Activated naive CD4-positive, alpha-beta T cell treated with anti-CD3 and anti-CD28 coated beads for 36 hours (primary cell): ENCODE measurements at regions of chr3 and their contacts with region 1.

Region 1: GRCh38 chr3:10142707-10143566 is 1.4 kb downstream of the VHL start:
- DNase-seq: peak; percentile 48
- H3K4me3 Mint-ChIP-seq: peak overlapping the region; percentile 84
- H3K27ac Mint-ChIP-seq: peak overlapping the region; percentile 87
- H3K4me1 Mint-ChIP-seq: peaks cover 32% of the 10 kb centered on the region
- H3K27me3 Mint-ChIP-seq: no peaks in the 10 kb centered on the region

Region 2: DNA sequence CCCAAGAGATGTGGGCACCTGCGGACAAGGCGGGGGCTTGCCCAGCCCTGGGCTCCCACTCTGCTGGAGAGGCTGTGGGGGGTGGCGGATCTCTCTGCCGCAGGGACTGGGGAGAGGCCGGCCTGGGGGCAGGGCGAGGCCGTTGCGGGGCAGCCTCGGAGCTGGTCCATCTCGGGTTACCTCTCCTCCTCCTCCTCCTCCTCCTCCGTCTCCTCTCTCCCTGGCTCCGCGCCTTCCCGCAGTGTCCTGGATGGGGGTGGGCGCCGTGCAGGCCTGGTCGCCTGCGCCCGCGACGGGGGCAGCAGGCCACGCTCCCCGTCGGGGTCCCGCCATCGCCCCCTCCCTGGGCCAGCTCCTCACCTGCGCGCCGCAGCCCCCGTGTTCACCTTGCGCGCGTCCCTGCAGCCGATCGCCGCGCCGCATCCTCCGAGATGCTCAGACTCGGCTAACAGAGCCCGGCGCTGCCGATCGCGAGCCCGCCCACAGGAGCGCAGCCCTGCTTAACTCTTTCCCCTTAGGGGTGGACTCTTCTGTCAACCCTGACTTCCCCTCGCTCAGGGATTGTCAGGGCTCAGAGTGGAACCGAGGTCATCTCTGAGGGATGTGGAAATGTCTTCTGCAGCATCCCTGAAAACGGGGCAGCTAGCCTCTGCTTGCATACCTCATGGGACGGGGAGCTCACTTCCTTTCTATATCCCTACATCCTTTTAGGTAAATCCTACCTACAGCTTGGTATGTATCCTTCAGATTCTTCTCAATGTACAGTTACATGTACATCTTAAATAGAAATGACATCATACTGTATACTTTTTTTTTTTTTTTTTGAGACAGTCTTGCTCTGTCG is 190.8 kb before region 1 on chr3 and contains the start of gene PRRT3:
- CTCF ChIA-PET with region 1: no interaction called
- intact Hi-C with region 1: loop called (anchors 1 kb)
- DNase-seq: peak; percentile 77
- H3K4me3 Mint-ChIP-seq: peak within 1 kb of the TSS; percentile 81
- H3K27ac Mint-ChIP-seq: peak within 1 kb of the TSS; percentile 86
- H3K4me1 Mint-ChIP-seq: peaks cover 16% of the 10 kb centered on the region
- H3K27me3 Mint-ChIP-seq: no peaks in the 10 kb centered on the region
- total RNA-seq, gene PRRT3: 5.8 to 6.7 TPM

Region 3: GRCh38 chr3:10164546-10165393 is 21.8 kb after region 1 on chr3 and contains the start of gene IRAK2:
- CTCF ChIA-PET with region 1: interaction called, 7 read pairs
- intact Hi-C with region 1: loop called (anchors 2 kb)
- DNase-seq: peak; percentile 62
- H3K4me3 Mint-ChIP-seq: peak within 1 kb of the TSS; percentile 75
- H3K27ac Mint-ChIP-seq: no peak within 1 kb of the TSS
- H3K4me1 Mint-ChIP-seq: peaks cover 23% of the 10 kb centered on the region
- H3K27me3 Mint-ChIP-seq: no peaks in the 10 kb centered on the region
- total RNA-seq, gene IRAK2: 6.4 to 6.9 TPM